Psoas muscle (tissue), 8 donors: ENCODE measurements at regions of chr3 and their contacts with region 1.

Region 1: GRCh38 chr3:172129870-172130683 is 90.7 kb downstream of the FNDC3B start:
- DNase-seq: peak; percentile 94 to 96
- ATAC-seq: peak; percentile 87 to 93 (median 89)
- H3K4me3 ChIP-seq: peak overlapping the region; percentile 33
- H3K27ac ChIP-seq: peak overlapping the region; percentile 95
- H3K4me1 ChIP-seq: peaks cover 91% of the 10 kb centered on the region
- H3K27me3 ChIP-seq: no peaks in the 10 kb centered on the region
- CTCF ChIP-seq: no peak

Region 2: GRCh38 chr3:172106989-172107388 is 23.1 kb before region 1 on chr3:
- intact Hi-C with region 1: loop called in 1 of 2 experiments (anchors 2 kb)
- DNase-seq: no peak
- ATAC-seq: no peak
- H3K4me3 ChIP-seq: no peak overlapping the region
- H3K27ac ChIP-seq: no peak overlapping the region
- H3K4me1 ChIP-seq: peaks cover 37% of the 10 kb centered on the region
- H3K27me3 ChIP-seq: no peaks in the 10 kb centered on the region
- CTCF ChIP-seq: no peak